Activated naive CD4-positive, alpha-beta T cell treated with anti-CD3 and anti-CD28 coated beads for 36 hours (primary cell): ENCODE measurements at regions of chr20 and their contacts with region 1.

Region 1: DNA sequence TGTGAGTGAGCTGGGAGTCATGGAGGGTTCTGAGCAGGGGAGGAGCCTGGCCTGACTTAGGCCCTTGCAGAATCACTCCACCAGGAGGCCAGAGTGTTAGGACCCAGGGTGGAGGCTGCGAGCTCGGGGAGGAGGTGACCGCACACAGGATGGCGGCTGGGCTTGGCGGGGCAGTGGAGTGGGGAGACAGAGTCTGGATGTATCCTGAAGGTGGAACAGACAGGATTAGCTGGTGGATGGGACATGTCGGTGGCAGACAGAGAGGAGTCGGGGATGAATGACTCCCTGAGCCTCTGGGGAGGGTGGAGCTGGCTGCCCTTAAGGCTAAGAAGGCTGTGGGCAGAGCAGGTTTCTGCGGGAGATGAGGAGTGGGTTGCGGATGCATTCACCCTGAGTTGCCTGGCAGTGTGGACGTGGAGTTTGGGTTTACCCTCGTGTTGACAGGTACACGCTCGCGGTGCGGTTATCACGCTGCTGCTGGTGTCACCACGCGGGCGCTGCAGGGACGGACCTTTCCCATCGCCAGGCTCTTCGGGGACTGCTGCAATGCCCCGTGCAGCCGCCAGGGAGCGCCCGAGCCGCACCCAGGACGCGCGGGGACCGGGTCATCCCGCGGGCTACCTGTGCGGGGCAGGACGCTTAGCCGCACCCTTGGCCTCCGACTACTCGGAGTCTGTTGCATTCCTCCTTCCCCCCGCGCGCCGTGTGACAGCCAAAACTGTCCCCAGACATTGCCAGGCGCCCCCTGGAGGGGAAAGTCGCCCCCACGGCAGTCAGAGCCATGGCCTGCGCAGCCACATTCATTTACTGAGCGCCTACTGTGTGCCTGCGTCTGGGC is 43.0 kb upstream of the PTGIS start:
- DNase-seq: peak; percentile 83
- H3K4me3 Mint-ChIP-seq: peak overlapping the region; percentile 29
- H3K27ac Mint-ChIP-seq: no peak overlapping the region
- H3K4me1 Mint-ChIP-seq: peaks cover 12% of the 10 kb centered on the region
- H3K27me3 Mint-ChIP-seq: peaks cover 10% of the 10 kb centered on the region

Region 2: DNA sequence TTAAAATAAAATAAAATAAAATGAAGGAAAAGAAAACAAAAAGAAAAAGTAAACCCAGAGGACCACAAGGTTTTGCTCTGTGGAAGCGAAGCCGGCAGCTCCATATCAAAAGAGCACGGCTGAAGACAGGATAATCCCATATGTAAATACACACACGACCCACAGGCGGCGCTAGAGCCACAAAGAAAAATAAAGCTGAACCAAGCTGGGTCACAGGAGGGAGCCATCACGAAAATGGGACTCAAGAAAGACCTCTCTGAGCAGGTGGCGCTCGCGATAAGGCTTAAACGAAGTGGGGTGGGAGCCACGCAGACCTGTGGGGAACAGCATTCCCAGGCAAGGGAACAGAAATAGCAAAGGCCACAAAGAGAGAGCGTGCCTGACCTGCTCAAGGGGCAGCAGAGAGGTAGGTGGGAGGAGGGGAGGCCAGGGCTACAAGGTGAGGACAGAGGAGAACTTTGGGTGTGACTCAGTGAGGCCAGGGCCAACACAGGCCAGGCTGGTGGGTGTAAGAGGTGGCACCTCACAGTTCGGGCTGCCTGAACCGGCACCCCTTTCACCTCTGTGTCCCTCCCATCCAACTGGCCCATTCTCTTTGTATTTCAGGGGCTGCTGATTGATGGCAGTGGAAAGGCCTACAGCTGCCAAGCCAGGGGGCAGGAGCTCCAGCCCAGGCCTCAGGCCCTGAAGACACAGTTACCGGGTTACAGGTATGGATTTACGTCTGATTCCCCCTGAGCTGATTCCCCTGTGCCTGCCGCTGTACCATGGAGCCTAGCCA is 69.0 kb before region 1 on chr20:
- CTCF ChIA-PET with region 1: interaction called, 166 read pairs
- intact Hi-C with region 1: loop called (anchors 1 kb)
- DNase-seq: peak; percentile 79
- H3K4me3 Mint-ChIP-seq: no peak overlapping the region
- H3K27ac Mint-ChIP-seq: no peak overlapping the region
- H3K4me1 Mint-ChIP-seq: no peaks in the 10 kb centered on the region
- H3K27me3 Mint-ChIP-seq: peaks cover 10% of the 10 kb centered on the region

Region 3: GRCh38 chr20:49567421-49568334 is 43.2 kb before region 1 on chr20 and contains the start of gene PTGIS:
- CTCF ChIA-PET with region 1: no interaction called
- intact Hi-C with region 1: no loop called
- DNase-seq: no peak
- H3K4me3 Mint-ChIP-seq: no peak within 1 kb of the TSS
- H3K27ac Mint-ChIP-seq: no peak within 1 kb of the TSS
- H3K4me1 Mint-ChIP-seq: peaks cover 3% of the 10 kb centered on the region
- H3K27me3 Mint-ChIP-seq: peaks cover 42% of the 10 kb centered on the region
- total RNA-seq, gene PTGIS: not detected

Region 4: DNA sequence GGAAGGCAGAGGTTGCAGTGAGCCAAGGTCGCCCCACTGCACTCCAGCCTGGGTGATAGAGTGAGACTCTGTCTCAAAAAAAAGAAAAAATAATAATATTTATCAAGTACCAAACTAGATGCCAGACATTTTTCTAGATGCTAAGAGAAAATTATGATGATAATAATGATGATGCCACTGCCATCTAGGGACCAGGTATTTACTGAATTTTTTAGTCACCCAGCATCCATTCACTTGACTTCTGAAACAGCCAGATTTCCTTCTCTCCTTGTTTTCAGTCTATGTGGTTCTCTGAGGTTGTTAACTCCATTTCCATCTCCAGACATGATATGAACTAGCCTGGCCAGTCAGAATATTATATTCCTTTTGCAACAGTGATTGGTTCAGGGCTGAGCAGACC is 112.0 kb after region 1 on chr20:
- CTCF ChIA-PET with region 1: interaction called, 3 read pairs
- intact Hi-C with region 1: loop called (anchors 1 kb)
- DNase-seq: no peak
- H3K4me3 Mint-ChIP-seq: no peak overlapping the region
- H3K27ac Mint-ChIP-seq: no peak overlapping the region
- H3K4me1 Mint-ChIP-seq: peaks cover 8% of the 10 kb centered on the region
- H3K27me3 Mint-ChIP-seq: no peaks in the 10 kb centered on the region

Region 5: GRCh38 chr20:49823152-49823847 is 212.4 kb after region 1 on chr20:
- CTCF ChIA-PET with region 1: interaction called, 7 read pairs
- intact Hi-C with region 1: loop called (anchors 1 kb)
- DNase-seq: no peak
- H3K4me3 Mint-ChIP-seq: peak overlapping the region; percentile 3
- H3K27ac Mint-ChIP-seq: peak overlapping the region; percentile 84
- H3K4me1 Mint-ChIP-seq: peaks cover 45% of the 10 kb centered on the region
- H3K27me3 Mint-ChIP-seq: no peaks in the 10 kb centered on the region

Region 6: GRCh38 chr20:49888345-49888966 is 277.5 kb after region 1 on chr20:
- CTCF ChIA-PET with region 1: interaction called, 17 read pairs
- intact Hi-C with region 1: loop called (anchors 1 kb)
- DNase-seq: peak; percentile 68
- H3K4me3 Mint-ChIP-seq: no peak overlapping the region
- H3K27ac Mint-ChIP-seq: peak overlapping the region; percentile 59
- H3K4me1 Mint-ChIP-seq: peaks cover 4% of the 10 kb centered on the region
- H3K27me3 Mint-ChIP-seq: no peaks in the 10 kb centered on the region